ENCODE measurements at regions of chr10 and their contacts with region 1.

Region 1: DNA sequence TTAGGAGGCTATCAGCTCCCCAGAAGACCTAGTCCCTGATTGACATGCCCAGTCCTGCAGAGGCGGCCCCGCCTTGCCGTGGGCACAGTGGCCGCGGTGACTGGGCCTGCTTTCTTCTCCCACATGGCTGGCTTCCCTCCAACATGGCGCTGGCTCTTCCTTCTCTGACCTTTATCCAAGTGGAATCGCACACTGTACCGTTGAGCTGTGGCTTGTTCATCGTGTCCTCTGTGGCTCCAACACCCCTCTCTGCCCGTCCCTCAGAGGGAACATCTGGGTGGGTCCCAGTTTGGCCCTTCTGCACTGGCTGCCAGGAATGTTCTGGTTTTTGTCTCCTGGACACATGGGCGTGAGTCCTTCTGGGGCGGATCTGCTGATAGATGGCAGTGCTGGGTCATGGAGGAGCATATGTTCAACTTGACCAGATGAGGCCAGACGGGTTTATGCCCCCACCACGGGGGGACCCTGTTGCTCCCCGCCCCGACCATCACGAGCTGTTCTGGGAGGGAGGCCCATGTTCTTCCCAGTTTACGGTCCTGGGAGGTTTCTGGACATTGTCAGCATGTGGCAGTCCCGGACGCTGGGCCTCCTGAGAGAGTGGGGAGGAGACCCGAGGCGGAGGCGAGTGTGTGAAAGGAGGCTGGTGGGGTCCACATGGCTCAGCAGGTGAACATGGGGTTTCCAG is 63.5 kb downstream of the LHPP start:
- DNase-seq: peak in 1 of 2 donors; percentile 46
- H3K4me3 ChIP-seq: no peak overlapping the region
- H3K27ac ChIP-seq: no peak overlapping the region
- H3K4me1 ChIP-seq: no peaks in the 10 kb centered on the region
- H3K27me3 ChIP-seq: no peaks in the 10 kb centered on the region
- CTCF ChIP-seq: no peak
- POLR2A ChIP-seq: no peak

Region 2: GRCh38 chr10:124428207-124428777 is 96.8 kb before region 1 on chr10:
- intact Hi-C with region 1: loop called (anchors 2 kb)
- DNase-seq: no peak
- H3K4me3 ChIP-seq: no peak overlapping the region
- H3K27ac ChIP-seq: no peak overlapping the region
- H3K4me1 ChIP-seq: no peaks in the 10 kb centered on the region
- H3K27me3 ChIP-seq: peaks cover 0 to 4% of the 10 kb centered on the region in 2 donors
- CTCF ChIP-seq: no peak
- POLR2A ChIP-seq: no peak

Region 3: DNA sequence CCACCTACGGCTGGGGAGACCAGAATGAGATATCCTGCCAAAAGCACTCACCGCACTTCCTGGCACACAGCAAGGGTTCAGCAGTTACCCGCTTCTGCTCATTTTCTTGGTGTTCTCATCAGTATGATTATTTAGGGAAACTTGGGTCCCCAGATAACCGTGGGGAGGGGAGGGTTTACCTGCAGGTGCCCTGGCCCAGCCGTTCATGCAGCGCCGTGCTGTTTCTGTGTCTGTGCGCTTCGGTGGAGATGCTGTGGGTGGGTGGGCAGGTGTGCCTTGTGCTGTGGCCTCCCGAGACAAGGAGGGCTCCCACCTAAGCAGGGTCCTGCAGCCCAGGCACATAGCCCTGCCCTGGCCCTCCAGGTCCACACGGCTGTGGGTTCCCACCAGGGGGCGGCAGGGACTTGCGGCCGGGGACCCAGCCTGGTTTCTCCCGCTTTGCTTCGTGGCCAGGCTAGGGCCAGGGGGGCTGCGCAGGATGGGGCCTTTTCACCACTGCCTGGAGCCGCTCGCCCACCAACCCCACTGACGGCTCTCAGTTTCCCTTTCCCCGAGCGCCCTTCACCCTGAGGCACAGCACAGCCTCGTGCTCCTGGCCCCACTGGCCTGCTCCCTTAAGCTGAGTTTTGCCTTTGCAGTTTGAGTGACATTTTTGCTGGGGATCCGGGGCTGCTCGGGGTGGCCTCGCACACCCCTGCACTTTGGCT is 15.0 kb after region 1 on chr10:
- intact Hi-C with region 1: loop called (anchors 1 kb)
- DNase-seq: no peak
- H3K4me3 ChIP-seq: no peak overlapping the region
- H3K27ac ChIP-seq: no peak overlapping the region
- H3K4me1 ChIP-seq: no peaks in the 10 kb centered on the region
- H3K27me3 ChIP-seq: no peaks in the 10 kb centered on the region
- CTCF ChIP-seq: peak; percentile 10 to 64 (median 55)
- POLR2A ChIP-seq: no peak

Measured in breast epithelium (tissue), 4 donors.